Posterior vena cava (tissue), 2 donors: ENCODE measurements at regions of chr22 and their contacts with region 1.

Region 1: GRCh38 chr22:32985899-32986765 is 72.0 kb downstream of the SYN3 start:
- DNase-seq: no peak

Region 2: DNA sequence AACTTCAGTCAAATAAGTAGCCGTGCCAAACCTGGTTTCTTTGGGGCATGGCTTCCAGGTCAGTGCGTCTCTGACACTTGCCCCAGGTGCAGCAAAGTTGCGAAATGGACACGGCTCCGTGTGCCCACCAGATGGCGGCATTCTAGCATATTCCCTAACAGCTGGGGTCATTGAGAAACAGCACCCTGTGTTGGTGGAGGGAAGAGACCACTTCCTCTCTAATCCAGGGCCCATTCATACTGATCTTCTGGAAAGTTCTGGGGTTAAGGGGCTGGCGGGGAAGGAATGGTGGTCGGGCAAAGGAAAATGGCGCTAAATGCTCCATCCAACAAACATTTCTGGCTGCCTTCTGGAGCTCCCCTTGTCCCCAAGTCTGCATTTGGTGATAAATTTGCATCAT is 325.8 kb before region 1 on chr22:
- intact Hi-C with region 1: loop called in 1 of 2 experiments (anchors 5 kb)
- DNase-seq: peak; percentile 88